PC-9 (cell line): ENCODE measurements at regions of chr1 and their contacts with region 1.

Region 1: DNA sequence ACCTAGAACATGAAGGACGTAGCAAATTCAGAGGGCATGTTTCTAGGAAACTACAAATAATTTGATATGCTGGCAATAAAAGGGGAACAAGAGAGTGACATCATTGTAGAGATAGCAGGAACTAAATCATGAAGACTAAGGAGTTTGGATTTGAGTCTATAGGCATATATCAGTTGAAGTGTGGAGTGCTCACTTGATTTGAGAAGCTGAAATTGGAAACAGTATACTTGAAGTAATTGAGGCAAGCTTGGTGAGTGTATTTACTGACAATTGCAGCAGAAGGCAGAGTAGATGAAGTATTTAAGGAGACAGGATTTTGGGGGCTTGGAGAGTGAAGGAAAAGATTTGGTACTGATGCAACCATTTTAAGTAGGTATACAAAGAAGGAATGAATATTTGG is 6.4 kb upstream of the TMCO2 start:
- DNase-seq: no peak
- H3K4me3 ChIP-seq: peak overlapping the region; percentile 11; the same call in 1 of the 2 replicates
- H3K27ac ChIP-seq: peak overlapping the region; percentile 68
- H3K4me1 ChIP-seq: peaks cover 24% of the 10 kb centered on the region
- H3K27me3 ChIP-seq: no peaks in the 10 kb centered on the region
- CTCF ChIP-seq: no peak

Region 2: DNA sequence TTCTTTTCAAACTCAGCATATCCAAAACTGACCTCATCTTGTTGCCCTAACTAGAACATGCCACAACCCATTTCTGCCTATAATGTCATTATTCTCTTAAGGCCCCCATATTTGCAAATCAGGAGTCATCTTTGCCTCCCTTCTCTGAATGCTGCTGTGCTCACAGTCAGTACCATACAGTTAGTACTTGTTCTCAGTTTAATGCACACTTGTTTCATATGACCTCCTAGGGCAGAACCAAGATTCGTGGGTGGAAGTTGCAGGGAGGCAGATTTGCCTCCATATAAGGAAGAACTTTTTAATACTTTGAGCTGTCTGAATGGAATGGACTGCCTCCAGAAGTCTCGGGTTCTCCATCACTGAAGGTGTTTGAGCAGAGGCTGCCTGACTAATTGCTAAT is 191.6 kb before region 1 on chr1:
- CTCF ChIA-PET with region 1: no interaction called
- POLR2A ChIA-PET with region 1: no interaction called
- intact Hi-C with region 1: no loop called
- DNase-seq: peak in 1 of 2 experiments; percentile 16
- H3K4me3 ChIP-seq: no peak overlapping the region
- H3K27ac ChIP-seq: no peak overlapping the region
- H3K4me1 ChIP-seq: no peaks in the 10 kb centered on the region
- H3K27me3 ChIP-seq: no peaks in the 10 kb centered on the region
- CTCF ChIP-seq: no peak

Region 3: GRCh38 chr1:40183055-40183710 is 58.2 kb before region 1 on chr1:
- CTCF ChIA-PET with region 1: interaction called, 10 read pairs
- POLR2A ChIA-PET with region 1: no interaction called
- intact Hi-C with region 1: no loop called
- DNase-seq: peak in 1 of 2 experiments; percentile 42
- H3K4me3 ChIP-seq: no peak overlapping the region
- H3K27ac ChIP-seq: no peak overlapping the region
- H3K4me1 ChIP-seq: no peaks in the 10 kb centered on the region
- H3K27me3 ChIP-seq: no peaks in the 10 kb centered on the region
- CTCF ChIP-seq: peak; percentile 61

Region 4: GRCh38 chr1:40197656-40198055 is 43.7 kb before region 1 on chr1:
- CTCF ChIA-PET with region 1: interaction called, 3 read pairs
- POLR2A ChIA-PET with region 1: no interaction called
- intact Hi-C with region 1: loop called (anchors 5 kb)
- DNase-seq: no peak
- H3K4me3 ChIP-seq: no peak overlapping the region
- H3K27ac ChIP-seq: no peak overlapping the region
- H3K4me1 ChIP-seq: no peaks in the 10 kb centered on the region
- H3K27me3 ChIP-seq: no peaks in the 10 kb centered on the region
- CTCF ChIP-seq: peak; percentile 45

Region 5: DNA sequence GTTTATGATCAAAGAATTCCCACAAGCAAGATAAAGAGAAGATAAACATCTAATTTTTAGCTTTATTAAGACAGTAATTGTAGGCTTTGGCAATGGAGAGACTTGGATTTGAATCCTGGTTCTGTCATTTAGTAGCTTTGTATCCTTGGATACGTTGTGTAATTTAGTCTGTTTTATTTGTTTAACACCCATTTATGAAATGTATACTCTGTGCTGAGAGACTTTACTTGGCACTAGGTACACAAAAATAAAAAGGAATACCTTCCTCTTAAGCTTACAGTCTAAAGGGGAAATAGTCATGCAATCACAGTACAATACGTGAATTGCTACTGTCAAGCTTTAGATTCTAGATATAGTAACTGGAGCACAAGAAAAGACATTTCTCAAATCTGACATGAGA is 40.5 kb after region 1 on chr1:
- CTCF ChIA-PET with region 1: interaction called, 19 read pairs
- POLR2A ChIA-PET with region 1: no interaction called
- intact Hi-C with region 1: no loop called
- DNase-seq: no peak
- H3K4me3 ChIP-seq: no peak overlapping the region
- H3K27ac ChIP-seq: no peak overlapping the region
- H3K4me1 ChIP-seq: no peaks in the 10 kb centered on the region
- H3K27me3 ChIP-seq: no peaks in the 10 kb centered on the region
- CTCF ChIP-seq: no peak

Region 6: GRCh38 chr1:41394959-41395956 is 1153.9 kb after region 1 on chr1:
- CTCF ChIA-PET with region 1: no interaction called
- POLR2A ChIA-PET with region 1: no interaction called
- intact Hi-C with region 1: no loop called
- DNase-seq: peak in 1 of 2 experiments; percentile 36
- H3K4me3 ChIP-seq: no peak overlapping the region
- H3K27ac ChIP-seq: no peak overlapping the region
- H3K4me1 ChIP-seq: no peaks in the 10 kb centered on the region
- H3K27me3 ChIP-seq: no peaks in the 10 kb centered on the region
- CTCF ChIP-seq: no peak